Activated CD4-positive, alpha-beta T cell treated with anti-CD3 and anti-CD28 coated beads for 36 hours (primary cell): ENCODE measurements at regions of chr1 and their contacts with region 1.

Region 1: GRCh38 chr1:28248283-28249012 is 10.9 kb upstream of the SESN2 start:
- DNase-seq: peak; percentile 92
- ATAC-seq: peak; percentile 31
- H3K4me3 Mint-ChIP-seq: peak overlapping the region; percentile 82
- H3K27ac Mint-ChIP-seq: peak overlapping the region; percentile 83
- H3K4me1 Mint-ChIP-seq: peaks cover 54% of the 10 kb centered on the region
- H3K27me3 Mint-ChIP-seq: no peaks in the 10 kb centered on the region

Region 2: DNA sequence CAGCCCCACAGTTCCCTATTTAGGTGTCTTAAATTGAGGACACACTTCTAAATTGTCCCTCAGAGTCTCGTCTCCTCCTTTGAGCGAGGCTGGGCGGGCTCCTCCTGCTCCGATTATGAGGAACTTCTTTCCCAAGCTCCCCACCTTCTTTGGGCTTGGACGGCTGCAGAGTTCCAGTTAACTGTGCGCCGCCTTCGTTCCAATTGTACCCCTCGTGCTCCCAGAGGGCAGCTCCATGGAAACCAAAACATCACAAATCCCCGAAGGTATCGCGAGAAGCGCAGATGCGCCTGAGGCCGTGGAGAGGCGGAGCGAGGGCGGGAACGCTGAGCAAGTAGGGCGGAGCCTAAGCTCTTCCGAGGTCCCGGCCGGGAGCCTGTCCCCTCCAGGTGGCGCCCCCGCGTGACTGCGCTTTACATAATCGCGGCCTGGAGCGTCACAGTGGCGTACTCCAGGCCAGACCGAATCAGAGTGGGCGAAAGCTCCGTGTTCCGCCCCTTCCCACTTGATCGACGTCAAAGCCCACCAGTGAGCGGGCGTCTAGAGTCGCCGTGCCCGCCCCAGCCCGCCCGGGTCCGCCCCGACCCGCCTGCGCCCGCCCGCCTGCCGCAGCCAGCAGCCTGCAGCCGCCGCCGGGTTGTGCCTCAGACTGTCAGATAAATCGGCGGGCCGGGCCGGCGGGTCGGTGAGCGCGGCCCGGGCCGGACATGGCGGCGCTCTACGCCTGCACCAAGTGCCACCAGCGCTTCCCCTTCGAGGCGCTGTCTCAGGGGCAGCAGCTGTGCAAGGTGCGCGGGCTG is 522.9 kb before region 1 on chr1 and contains the start of gene FAM76A:
- CTCF ChIA-PET with region 1: no interaction called
- POLR2A ChIA-PET with region 1: no interaction called
- intact Hi-C with region 1: loop called in 1 of 2 experiments (anchors 1 kb)
- DNase-seq: peak; percentile 100
- ATAC-seq: peak; percentile 95
- H3K4me3 Mint-ChIP-seq: peak within 1 kb of the TSS; percentile 78
- H3K27ac Mint-ChIP-seq: peak within 1 kb of the TSS; percentile 93
- H3K4me1 Mint-ChIP-seq: peaks cover 15% of the 10 kb centered on the region
- H3K27me3 Mint-ChIP-seq: no peaks in the 10 kb centered on the region
- total RNA-seq, gene FAM76A: 7.4 to 8.1 TPM

Region 3: GRCh38 chr1:28199328-28200233 is 48.9 kb before region 1 on chr1:
- CTCF ChIA-PET with region 1: interaction called, 4 read pairs
- POLR2A ChIA-PET with region 1: no interaction called
- intact Hi-C with region 1: loop called in 1 of 2 experiments (anchors 1 kb)
- DNase-seq: peak; percentile 84
- ATAC-seq: peak; percentile 92
- H3K4me3 Mint-ChIP-seq: peak overlapping the region; percentile 37
- H3K27ac Mint-ChIP-seq: peak overlapping the region; percentile 89
- H3K4me1 Mint-ChIP-seq: peaks cover 47% of the 10 kb centered on the region
- H3K27me3 Mint-ChIP-seq: no peaks in the 10 kb centered on the region

Region 4: GRCh38 chr1:28296401-28297261 is 48.2 kb after region 1 on chr1:
- CTCF ChIA-PET with region 1: interaction called, 12 read pairs
- POLR2A ChIA-PET with region 1: no interaction called
- intact Hi-C with region 1: no loop called
- DNase-seq: no peak
- ATAC-seq: no peak
- H3K4me3 Mint-ChIP-seq: no peak overlapping the region
- H3K27ac Mint-ChIP-seq: no peak overlapping the region
- H3K4me1 Mint-ChIP-seq: no peaks in the 10 kb centered on the region
- H3K27me3 Mint-ChIP-seq: no peaks in the 10 kb centered on the region

Region 5: DNA sequence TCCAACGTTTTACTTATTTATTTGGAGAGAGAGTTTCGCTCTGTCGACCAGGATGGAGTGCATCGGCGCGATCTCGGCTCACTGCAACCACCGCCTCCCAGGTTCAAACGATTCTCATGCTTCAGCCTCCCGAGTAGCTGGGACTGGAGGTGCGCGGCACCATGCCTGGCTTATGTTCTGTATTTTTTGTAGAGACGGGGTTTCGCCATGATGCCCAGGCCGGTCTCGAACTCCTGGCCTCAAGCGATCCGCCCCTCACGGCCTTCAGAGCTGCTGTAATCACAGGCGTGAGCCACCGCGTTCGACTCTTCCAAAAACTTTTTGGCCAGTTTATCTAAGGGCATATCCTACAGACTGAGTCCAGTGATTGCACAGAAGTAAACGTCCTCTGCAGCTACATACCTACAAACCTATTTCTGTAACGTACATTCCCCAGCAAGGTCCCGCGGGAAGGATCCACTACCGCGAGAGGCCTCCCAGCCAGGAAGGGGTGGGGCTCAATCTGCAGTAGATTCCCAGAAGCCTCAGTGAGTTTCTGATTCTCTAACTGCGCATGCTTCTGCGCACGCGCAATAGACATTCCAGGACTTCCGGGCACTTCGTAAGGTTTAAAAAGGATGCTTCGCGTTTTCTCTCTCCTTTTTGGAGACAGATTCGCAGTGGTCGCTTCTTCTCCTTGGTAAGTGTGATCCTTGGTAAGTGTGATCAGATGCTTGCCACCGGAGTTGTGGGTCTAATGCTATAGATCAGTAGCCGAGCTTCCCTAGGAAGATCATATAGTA is 257.1 kb after region 1 on chr1 and contains the start of gene RCC1:
- CTCF ChIA-PET with region 1: interaction called, 3 read pairs
- POLR2A ChIA-PET with region 1: interaction called, 6 read pairs
- intact Hi-C with region 1: loop called (anchors 1 to 2 kb)
- DNase-seq: peak; percentile 97
- ATAC-seq: peak; percentile 85
- H3K4me3 Mint-ChIP-seq: peak within 1 kb of the TSS; percentile 98
- H3K27ac Mint-ChIP-seq: peak within 1 kb of the TSS; percentile 99
- H3K4me1 Mint-ChIP-seq: peaks cover 26% of the 10 kb centered on the region
- H3K27me3 Mint-ChIP-seq: peaks cover 1% of the 10 kb centered on the region
- total RNA-seq, gene RCC1: 103 to 107 TPM

Region 6: DNA sequence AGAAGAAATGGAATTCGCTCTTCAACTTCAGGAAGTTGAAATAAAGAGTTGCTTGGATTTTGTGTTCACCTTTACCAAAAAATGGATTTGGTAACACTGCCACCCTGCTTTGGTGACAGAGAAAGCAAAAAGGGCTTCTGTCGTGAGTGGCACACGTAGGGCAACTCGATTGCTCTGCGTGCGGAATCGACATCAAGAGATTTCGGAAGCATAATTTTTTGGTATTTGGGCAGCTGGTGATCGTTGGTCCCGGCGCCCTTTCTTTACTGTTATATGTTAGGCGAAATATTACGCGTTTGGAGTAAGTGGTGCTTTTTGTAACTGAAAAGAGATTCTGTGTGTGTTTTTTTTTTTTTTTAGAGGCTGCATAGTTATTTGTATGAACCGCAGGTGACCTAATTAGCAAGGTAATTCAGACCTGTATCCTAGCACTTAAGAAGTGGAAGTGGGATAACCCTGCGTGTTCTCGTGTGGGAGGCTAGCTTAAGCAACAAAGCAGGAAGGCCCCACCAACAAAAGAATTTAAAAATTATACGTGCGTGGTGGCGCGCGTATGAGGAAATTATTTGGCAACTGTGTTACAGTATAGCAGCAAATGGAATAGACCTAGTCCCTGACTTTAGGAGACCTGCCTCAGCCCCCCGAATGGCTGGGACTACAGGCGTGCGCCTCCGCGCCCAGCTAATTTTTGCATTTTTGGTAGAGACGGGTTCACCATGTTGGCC is 400.2 kb after region 1 on chr1 and contains the start of gene RNU11:
- CTCF ChIA-PET with region 1: interaction called, 3 read pairs
- POLR2A ChIA-PET with region 1: interaction called, 3 read pairs
- intact Hi-C with region 1: loop called (anchors 1 to 5 kb)
- DNase-seq: peak; percentile 93
- ATAC-seq: peak; percentile 83
- H3K4me3 Mint-ChIP-seq: peak within 1 kb of the TSS; percentile 83
- H3K27ac Mint-ChIP-seq: peak within 1 kb of the TSS; percentile 100
- H3K4me1 Mint-ChIP-seq: peaks cover 34% of the 10 kb centered on the region
- H3K27me3 Mint-ChIP-seq: no peaks in the 10 kb centered on the region
- total RNA-seq, gene RNU11: not detected